BJ (cell line): ENCODE measurements at regions of chr4 and their contacts with region 1.

Region 1: DNA sequence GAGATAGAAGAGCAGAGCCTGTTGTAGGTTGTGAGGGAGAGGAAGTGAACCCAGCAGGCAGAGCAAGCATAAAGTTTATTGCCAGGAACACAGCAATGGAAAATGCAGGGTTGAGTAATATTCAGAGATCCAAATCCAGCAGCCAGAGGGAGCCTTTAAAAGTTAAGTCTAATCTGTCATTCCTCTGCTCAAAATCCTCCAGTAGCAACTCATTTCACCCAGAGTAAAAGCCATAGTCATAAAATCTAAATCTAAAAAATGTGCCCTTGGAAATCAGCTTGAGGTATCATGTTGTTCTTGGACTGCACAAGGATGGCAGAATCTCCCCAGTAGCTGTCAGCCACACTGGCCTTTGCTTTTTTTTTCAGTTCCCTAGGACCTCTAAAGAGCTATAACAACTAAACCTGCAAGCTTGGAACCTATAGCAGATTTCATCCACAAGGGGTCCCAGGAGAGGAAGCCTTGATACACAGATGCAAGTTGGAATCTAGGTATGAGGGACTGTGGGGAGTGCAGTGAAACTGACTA is 62.9 kb upstream of the FRAS1 start:
- DNase-seq: peak; percentile 57
- H3K4me3 ChIP-seq: no peak overlapping the region
- H3K27me3 ChIP-seq: no peaks in the 10 kb centered on the region; the same call in 1 of the 2 replicates
- CTCF ChIP-seq: peak; percentile 77

Region 2: DNA sequence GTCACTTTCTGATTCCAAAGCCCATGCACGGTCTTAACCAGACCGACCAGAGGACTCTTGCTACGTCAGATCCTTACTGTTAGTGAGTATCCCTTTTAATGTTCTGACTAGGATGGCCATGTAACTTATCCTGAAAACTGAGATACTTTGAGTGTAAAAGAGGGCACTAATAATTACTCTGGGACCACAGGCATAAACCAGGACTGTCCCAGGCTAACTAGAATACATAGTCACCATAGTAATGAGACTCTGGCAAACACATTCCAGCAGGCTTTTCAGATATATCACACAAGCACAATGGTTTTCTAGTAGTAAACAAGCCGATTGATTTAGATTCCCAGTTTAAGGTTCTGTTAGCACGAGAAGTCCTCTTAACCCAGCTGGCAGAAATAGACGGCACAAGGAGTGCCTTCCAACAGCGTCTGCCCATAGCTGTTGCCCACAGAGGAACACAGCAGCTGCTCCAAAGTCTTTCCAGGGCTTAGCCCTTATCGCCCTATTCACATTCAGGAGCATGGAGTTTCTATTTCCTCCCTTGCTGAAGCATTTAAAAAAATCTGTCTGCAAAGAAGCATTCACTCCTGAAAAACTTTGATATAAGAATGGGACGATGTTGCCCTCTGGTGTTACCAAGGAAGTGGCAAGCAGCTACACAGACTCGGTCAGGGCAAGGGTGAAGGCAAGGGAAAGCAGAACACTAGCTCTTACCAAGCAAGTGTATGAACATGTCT is 296.2 kb before region 1 on chr4:
- CTCF ChIA-PET with region 1: no interaction called
- POLR2A ChIA-PET with region 1: no interaction called
- DNase-seq: no peak
- H3K4me3 ChIP-seq: no peak overlapping the region
- H3K27me3 ChIP-seq: no peaks in the 10 kb centered on the region
- CTCF ChIP-seq: peak; percentile 65

Region 3: GRCh38 chr4:78004270-78004669 is 10.0 kb after region 1 on chr4:
- CTCF ChIA-PET with region 1: interaction called, 12 read pairs
- POLR2A ChIA-PET with region 1: no interaction called
- DNase-seq: no peak
- H3K4me3 ChIP-seq: no peak overlapping the region
- H3K27me3 ChIP-seq: no peaks in the 10 kb centered on the region
- CTCF ChIP-seq: no peak

Region 4: DNA sequence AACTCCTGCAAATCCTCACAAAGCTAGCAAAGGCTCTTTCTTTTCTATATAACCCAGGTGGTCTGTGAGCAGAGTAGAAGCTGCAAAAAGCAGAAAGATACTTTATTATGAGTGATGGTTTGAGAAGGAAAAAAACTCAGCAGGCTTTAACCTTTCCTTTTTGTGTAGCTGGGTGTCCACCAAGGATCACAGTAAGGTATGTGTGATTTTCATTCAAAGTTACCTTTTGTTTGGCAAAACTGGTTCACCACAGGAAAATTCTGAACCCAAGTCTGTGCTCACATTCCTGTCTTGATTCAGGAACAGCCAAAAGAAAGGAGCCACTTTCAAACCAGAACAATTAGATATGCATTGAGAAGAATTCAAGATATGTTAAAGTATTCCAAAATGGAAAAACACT is 98.6 kb after region 1 on chr4:
- CTCF ChIA-PET with region 1: no interaction called
- POLR2A ChIA-PET with region 1: no interaction called
- DNase-seq: no peak
- H3K4me3 ChIP-seq: no peak overlapping the region
- H3K27me3 ChIP-seq: no peaks in the 10 kb centered on the region
- CTCF ChIP-seq: no peak

Region 5: DNA sequence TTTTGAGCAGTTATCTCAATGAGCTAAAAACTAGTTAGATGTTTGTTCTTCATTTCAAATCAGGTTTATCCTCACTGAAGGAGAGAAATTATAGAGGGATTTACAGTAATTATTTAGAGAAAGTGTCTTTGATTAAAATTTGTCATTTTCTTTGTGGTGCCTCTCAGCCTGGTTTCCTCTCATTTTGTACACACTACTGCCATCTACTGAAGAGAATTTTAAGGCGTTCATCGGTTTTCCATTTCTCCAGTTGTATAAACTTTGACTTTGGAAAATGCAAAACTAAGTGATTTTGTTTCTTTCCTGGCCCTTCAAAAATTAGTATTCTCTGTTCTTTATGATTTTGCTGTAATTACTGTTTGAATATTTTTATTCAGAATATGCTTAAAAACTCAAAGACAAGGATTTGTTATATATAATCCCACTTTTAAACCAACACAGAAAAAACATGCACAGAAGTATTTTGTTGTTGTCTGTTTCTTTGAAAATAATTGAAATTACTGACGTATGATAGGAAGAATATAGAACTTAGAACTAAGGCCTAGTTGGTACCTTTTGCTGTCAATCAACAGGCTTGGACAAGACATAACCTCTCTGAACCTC is 522.9 kb after region 1 on chr4:
- CTCF ChIA-PET with region 1: interaction called, 11 read pairs
- POLR2A ChIA-PET with region 1: no interaction called
- DNase-seq: no peak
- H3K4me3 ChIP-seq: no peak overlapping the region
- H3K27me3 ChIP-seq: no peaks in the 10 kb centered on the region
- CTCF ChIP-seq: peak; percentile 69